CD8-positive, alpha-beta T cell (primary cell): ENCODE measurements at regions of chr6 and their contacts with region 1.

Region 1: DNA sequence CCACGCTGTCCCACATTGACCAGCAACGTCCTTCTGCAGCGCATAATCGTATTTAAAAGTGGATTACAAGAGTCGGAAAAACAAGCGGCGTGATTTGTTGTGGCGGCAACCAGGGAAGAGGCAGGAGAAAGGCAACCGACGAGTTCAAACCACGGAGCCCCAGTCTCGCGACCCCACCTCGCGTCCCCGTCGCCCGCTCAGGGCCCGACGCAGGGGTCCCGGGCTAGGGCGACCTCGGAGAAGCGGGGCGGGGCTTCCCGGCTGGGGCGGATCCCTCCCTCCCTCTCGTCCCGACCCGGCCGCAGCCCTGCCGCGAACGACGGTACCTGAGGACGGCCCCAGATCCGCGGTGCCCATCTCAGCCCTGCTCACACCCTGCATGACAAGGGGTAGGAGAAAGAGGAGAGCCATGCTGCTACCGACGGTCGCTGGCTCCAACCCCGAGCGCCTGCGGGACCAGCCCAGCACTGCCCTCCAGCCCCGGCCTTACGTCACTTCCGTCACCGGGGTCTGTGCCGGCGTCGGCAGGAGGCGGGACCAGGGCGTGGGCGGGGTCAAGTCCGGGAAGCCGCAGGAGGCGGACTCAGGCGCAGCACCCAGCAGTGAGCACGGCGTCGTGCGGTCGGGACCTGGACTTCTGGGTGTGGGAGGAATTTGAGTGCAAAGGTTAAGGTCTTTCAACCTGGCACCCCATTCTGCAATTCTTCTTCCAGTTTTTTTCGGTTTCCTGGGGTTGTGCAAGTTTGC is at the start of gene IFNGR1:
- DNase-seq: peak; percentile 89 to 97 (median 96)
- ATAC-seq: peak; percentile 87
- H3K4me3 ChIP-seq: peak within 1 kb of the TSS; percentile 62 to 72
- H3K4me3 Mint-ChIP-seq: peak within 1 kb of the TSS; percentile 94
- H3K27ac ChIP-seq: peak within 1 kb of the TSS; percentile 89 to 94
- H3K27ac Mint-ChIP-seq: peak within 1 kb of the TSS; percentile 97
- H3K4me1 ChIP-seq: peaks cover 30% of the 10 kb centered on the region
- H3K4me1 Mint-ChIP-seq: peaks cover 69% of the 10 kb centered on the region
- H3K27me3 ChIP-seq: no peaks in the 10 kb centered on the region
- H3K27me3 Mint-ChIP-seq: no peaks in the 10 kb centered on the region
- CTCF ChIP-seq: no peak
- total RNA-seq, gene IFNGR1: 106 to 117 TPM

Region 2: GRCh38 chr6:136289579-136290409 is 929.3 kb before region 1 on chr6 and contains the start of gene BCLAF1:
- CTCF ChIA-PET with region 1: no interaction called
- POLR2A ChIA-PET with region 1: no interaction called
- intact Hi-C with region 1: loop called in 1 of 2 experiments (anchors 5 kb)
- DNase-seq: peak; percentile 98 to 100 (median 99)
- ATAC-seq: peak; percentile 75
- H3K4me3 ChIP-seq: peak within 1 kb of the TSS; percentile 87 to 92
- H3K4me3 Mint-ChIP-seq: peak within 1 kb of the TSS; percentile 97
- H3K27ac ChIP-seq: peak within 1 kb of the TSS; percentile 98 to 100
- H3K27ac Mint-ChIP-seq: peak within 1 kb of the TSS; percentile 100
- H3K4me1 ChIP-seq: peaks cover 44% of the 10 kb centered on the region
- H3K4me1 Mint-ChIP-seq: peaks cover 44% of the 10 kb centered on the region
- H3K27me3 ChIP-seq: no peaks in the 10 kb centered on the region
- H3K27me3 Mint-ChIP-seq: no peaks in the 10 kb centered on the region
- CTCF ChIP-seq: no peak
- total RNA-seq, gene BCLAF1: 471 to 494 TPM

Region 3: GRCh38 chr6:136723780-136724179 is 495.3 kb before region 1 on chr6:
- CTCF ChIA-PET with region 1: no interaction called
- POLR2A ChIA-PET with region 1: no interaction called
- intact Hi-C with region 1: no loop called
- DNase-seq: peak in 8 of 9 experiments; percentile 16 to 63 (median 48)
- ATAC-seq: peak; percentile 99
- H3K4me3 ChIP-seq: no peak overlapping the region
- H3K4me3 Mint-ChIP-seq: peak overlapping the region; percentile 19
- H3K27ac ChIP-seq: no peak overlapping the region
- H3K27ac Mint-ChIP-seq: peak overlapping the region; percentile 23
- H3K4me1 ChIP-seq: peaks cover 7% of the 10 kb centered on the region
- H3K4me1 Mint-ChIP-seq: peaks cover 32% of the 10 kb centered on the region
- H3K27me3 ChIP-seq: no peaks in the 10 kb centered on the region
- H3K27me3 Mint-ChIP-seq: no peaks in the 10 kb centered on the region
- CTCF ChIP-seq: no peak

Region 4: GRCh38 chr6:137070303-137070702 is 148.8 kb before region 1 on chr6:
- CTCF ChIA-PET with region 1: no interaction called
- POLR2A ChIA-PET with region 1: no interaction called
- intact Hi-C with region 1: no loop called
- DNase-seq: peak in 1 of 9 experiments; percentile 9
- ATAC-seq: no peak
- H3K4me3 ChIP-seq: no peak overlapping the region
- H3K4me3 Mint-ChIP-seq: no peak overlapping the region
- H3K27ac ChIP-seq: no peak overlapping the region
- H3K27ac Mint-ChIP-seq: no peak overlapping the region
- H3K4me1 ChIP-seq: no peaks in the 10 kb centered on the region
- H3K4me1 Mint-ChIP-seq: peaks cover 7% of the 10 kb centered on the region
- H3K27me3 ChIP-seq: no peaks in the 10 kb centered on the region
- H3K27me3 Mint-ChIP-seq: peaks cover 27% of the 10 kb centered on the region
- CTCF ChIP-seq: no peak

Region 5: DNA sequence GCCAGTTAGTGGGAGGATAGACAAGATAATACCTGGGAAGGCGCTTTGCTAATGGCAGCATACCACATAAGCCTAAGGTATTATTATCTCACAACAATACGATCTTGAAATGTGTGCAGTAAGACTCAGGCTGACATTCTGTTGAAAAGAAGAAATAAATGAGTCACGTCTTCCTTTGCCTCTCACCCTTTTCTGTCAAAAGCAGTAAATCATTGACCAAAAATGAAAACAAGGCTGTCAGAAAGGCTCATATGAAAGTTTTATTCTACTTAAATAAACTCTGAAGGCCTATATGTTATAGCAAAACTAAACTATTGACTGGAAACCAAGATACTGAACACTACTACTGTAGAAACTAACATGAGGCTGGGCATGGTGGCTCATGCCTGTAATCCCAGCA is 131.2 kb before region 1 on chr6:
- CTCF ChIA-PET with region 1: no interaction called
- POLR2A ChIA-PET with region 1: no interaction called
- intact Hi-C with region 1: no loop called
- DNase-seq: no peak
- ATAC-seq: no peak
- H3K4me3 ChIP-seq: no peak overlapping the region
- H3K4me3 Mint-ChIP-seq: no peak overlapping the region
- H3K27ac ChIP-seq: no peak overlapping the region
- H3K27ac Mint-ChIP-seq: no peak overlapping the region
- H3K4me1 ChIP-seq: no peaks in the 10 kb centered on the region
- H3K4me1 Mint-ChIP-seq: no peaks in the 10 kb centered on the region
- H3K27me3 ChIP-seq: no peaks in the 10 kb centered on the region
- H3K27me3 Mint-ChIP-seq: peaks cover 5% of the 10 kb centered on the region
- CTCF ChIP-seq: no peak

Region 6: GRCh38 chr6:137202078-137202477 is 17.0 kb before region 1 on chr6:
- CTCF ChIA-PET with region 1: no interaction called
- POLR2A ChIA-PET with region 1: no interaction called
- intact Hi-C with region 1: no loop called
- DNase-seq: peak in 2 of 9 experiments; percentile 37 to 41
- ATAC-seq: no peak
- H3K4me3 ChIP-seq: no peak overlapping the region
- H3K4me3 Mint-ChIP-seq: no peak overlapping the region
- H3K27ac ChIP-seq: no peak overlapping the region
- H3K27ac Mint-ChIP-seq: no peak overlapping the region
- H3K4me1 ChIP-seq: no peaks in the 10 kb centered on the region
- H3K4me1 Mint-ChIP-seq: peaks cover 9% of the 10 kb centered on the region
- H3K27me3 ChIP-seq: no peaks in the 10 kb centered on the region
- H3K27me3 Mint-ChIP-seq: no peaks in the 10 kb centered on the region
- CTCF ChIP-seq: no peak

Region 7: GRCh38 chr6:137233911-137234863 is 15.1 kb after region 1 on chr6:
- CTCF ChIA-PET with region 1: interaction called, 6 read pairs
- POLR2A ChIA-PET with region 1: interaction called, 11 read pairs
- intact Hi-C with region 1: loop called (anchors 1 to 2 kb)
- DNase-seq: peak in 3 of 9 experiments; percentile 23 to 80 (median 69)
- ATAC-seq: peak; percentile 80
- H3K4me3 ChIP-seq: no peak overlapping the region
- H3K4me3 Mint-ChIP-seq: peak overlapping the region; percentile 13
- H3K27ac ChIP-seq: peak overlapping the region in 1 of 2 experiments; percentile 46
- H3K27ac Mint-ChIP-seq: peak overlapping the region; percentile 65
- H3K4me1 ChIP-seq: peaks cover 43% of the 10 kb centered on the region
- H3K4me1 Mint-ChIP-seq: peaks cover 61% of the 10 kb centered on the region
- H3K27me3 ChIP-seq: no peaks in the 10 kb centered on the region
- H3K27me3 Mint-ChIP-seq: no peaks in the 10 kb centered on the region
- CTCF ChIP-seq: no peak

Region 8: DNA sequence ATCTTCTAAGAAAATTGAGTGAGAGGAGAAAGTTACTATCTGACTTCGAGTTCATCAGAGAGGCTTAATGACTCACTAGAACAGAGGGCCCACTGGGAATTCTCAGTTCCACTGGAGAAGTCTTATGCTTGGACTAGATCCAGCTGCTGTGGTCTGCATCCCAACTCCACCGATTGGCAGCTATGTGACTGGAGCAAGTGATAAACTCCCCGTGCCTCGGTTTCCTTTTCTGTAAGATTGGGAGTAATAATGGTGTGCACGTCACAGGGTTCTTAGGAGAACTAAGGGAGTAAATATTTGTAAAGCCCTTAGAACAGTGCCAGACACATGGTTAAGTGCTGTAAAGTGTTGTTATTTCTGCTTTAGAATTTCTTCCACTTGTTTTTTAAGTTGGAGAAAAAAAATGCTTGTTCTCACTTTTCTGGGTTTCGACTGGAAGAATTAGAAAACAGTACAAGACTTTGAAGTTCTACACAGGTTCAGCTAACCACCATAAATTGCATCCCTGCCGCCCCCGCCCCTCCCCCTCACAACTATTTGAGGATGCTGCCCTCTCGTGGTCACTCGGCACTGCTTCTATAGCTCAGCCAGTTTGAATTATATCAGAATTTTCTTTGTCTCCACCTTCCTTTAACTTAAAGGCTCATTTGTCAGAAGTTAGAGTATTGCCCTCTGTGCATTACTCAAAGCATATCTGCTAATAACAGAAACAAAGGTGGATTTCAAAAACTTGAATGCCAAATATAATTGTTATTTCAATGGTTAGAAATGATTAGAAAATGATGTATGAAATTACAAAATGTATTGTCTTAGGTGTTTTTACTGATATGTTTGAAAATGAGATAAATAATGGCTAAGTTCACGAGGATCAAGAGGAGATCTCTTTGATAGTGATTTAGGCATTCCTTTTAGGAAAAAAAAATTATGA is 95.1 kb after region 1 on chr6:
- CTCF ChIA-PET with region 1: no interaction called
- POLR2A ChIA-PET with region 1: no interaction called
- intact Hi-C with region 1: loop called in 1 of 2 experiments (anchors 10 kb)
- DNase-seq: peak; percentile 43 to 84 (median 73)
- ATAC-seq: peak; percentile 73
- H3K4me3 ChIP-seq: no peak overlapping the region
- H3K4me3 Mint-ChIP-seq: no peak overlapping the region
- H3K27ac ChIP-seq: no peak overlapping the region
- H3K27ac Mint-ChIP-seq: no peak overlapping the region
- H3K4me1 ChIP-seq: no peaks in the 10 kb centered on the region
- H3K4me1 Mint-ChIP-seq: peaks cover 8% of the 10 kb centered on the region
- H3K27me3 ChIP-seq: no peaks in the 10 kb centered on the region
- H3K27me3 Mint-ChIP-seq: no peaks in the 10 kb centered on the region
- CTCF ChIP-seq: peak; percentile 73

Region 9: DNA sequence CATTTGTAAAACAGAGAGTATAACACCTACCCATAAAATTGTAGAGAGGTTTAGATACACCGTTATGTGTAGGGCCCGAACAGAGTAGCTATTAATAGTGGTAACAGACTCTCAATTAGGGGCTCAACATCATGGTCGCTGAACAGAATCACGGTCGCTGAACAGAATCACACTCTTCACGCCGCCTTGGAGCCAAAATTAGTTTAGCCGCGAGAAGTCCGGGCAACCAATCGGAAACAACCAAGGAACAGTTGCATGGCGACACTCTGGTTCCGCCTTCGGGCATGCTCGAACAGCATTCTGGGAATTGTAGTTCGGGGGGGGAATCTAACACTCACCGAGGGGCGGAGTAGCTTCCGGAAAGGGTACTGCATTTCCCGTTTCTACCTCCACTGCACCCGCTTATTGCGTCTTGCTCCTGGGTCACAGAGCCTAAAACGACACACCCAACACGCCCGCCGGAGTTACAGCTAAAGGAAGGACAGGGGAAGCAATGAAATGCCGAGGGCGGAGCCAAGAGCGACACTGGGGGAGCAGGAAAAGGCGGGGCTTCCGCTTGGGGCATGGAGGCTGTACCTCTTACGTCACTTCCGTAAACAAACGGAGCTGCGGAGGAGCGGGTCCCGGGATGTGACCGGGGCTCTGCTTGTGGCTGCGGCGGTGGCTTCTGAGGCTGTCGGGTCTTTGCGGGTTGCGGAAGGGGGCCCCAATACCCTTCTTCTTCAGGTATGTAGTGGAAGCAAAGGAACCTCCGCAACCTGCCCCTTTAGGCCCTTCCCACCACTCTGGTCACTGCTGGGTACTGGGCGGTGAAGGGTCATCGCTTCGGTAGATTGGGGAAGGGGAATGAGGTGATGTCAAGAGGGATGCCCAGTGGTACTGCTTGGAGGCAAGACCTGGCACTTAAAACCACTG is 1554.3 kb after region 1 on chr6 and contains the start of gene CCDC28A:
- CTCF ChIA-PET with region 1: no interaction called
- POLR2A ChIA-PET with region 1: no interaction called
- intact Hi-C with region 1: loop called (anchors 2 to 5 kb)
- DNase-seq: peak; percentile 87 to 97 (median 92)
- ATAC-seq: peak; percentile 84
- H3K4me3 ChIP-seq: peak within 1 kb of the TSS; percentile 68 to 90
- H3K4me3 Mint-ChIP-seq: peak within 1 kb of the TSS; percentile 100
- H3K27ac ChIP-seq: peak within 1 kb of the TSS; percentile 88 to 96
- H3K27ac Mint-ChIP-seq: peak within 1 kb of the TSS; percentile 100
- H3K4me1 ChIP-seq: peaks cover 19% of the 10 kb centered on the region
- H3K4me1 Mint-ChIP-seq: peaks cover 33% of the 10 kb centered on the region
- H3K27me3 ChIP-seq: no peaks in the 10 kb centered on the region
- H3K27me3 Mint-ChIP-seq: no peaks in the 10 kb centered on the region
- CTCF ChIP-seq: no peak
- total RNA-seq, gene CCDC28A: 38.2 to 39.4 TPM

Region 10: GRCh38 chr6:139117734-139118133 is 1898.6 kb after region 1 on chr6:
- CTCF ChIA-PET with region 1: no interaction called
- POLR2A ChIA-PET with region 1: no interaction called
- intact Hi-C with region 1: loop called in 1 of 2 experiments (anchors 5 kb)
- DNase-seq: no peak
- ATAC-seq: no peak
- H3K4me3 ChIP-seq: no peak overlapping the region
- H3K4me3 Mint-ChIP-seq: no peak overlapping the region
- H3K27ac ChIP-seq: no peak overlapping the region
- H3K27ac Mint-ChIP-seq: no peak overlapping the region
- H3K4me1 ChIP-seq: peaks cover 48% of the 10 kb centered on the region
- H3K4me1 Mint-ChIP-seq: peaks cover 50% of the 10 kb centered on the region
- H3K27me3 ChIP-seq: no peaks in the 10 kb centered on the region
- H3K27me3 Mint-ChIP-seq: no peaks in the 10 kb centered on the region
- CTCF ChIP-seq: no peak